Caki2 (cell line): ENCODE measurements at regions of chr10 and their contacts with region 1.

Region 1: DNA sequence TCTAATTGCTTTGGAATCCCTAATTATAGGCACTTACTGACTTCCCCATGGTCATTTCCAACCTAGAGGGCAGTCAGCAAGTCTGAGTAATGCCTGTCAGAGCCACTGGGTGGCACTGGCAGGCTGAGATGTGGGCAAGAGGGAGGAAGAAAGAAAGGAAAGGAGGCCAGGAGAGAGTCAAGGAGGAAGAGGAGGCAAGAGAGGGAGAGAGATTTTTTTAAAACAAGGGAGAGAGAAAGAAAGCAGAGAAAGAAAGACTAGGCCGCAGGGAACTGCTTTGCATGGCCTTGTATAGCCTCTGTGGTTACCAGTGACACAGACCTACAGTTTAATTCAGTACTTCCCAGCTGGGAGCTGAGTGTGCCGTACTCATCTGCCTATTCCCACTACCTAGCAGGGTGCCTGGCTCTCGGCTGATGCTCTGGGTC is 210.4 kb upstream of the ADO start:
- DNase-seq: peak; percentile 74

Region 2: DNA sequence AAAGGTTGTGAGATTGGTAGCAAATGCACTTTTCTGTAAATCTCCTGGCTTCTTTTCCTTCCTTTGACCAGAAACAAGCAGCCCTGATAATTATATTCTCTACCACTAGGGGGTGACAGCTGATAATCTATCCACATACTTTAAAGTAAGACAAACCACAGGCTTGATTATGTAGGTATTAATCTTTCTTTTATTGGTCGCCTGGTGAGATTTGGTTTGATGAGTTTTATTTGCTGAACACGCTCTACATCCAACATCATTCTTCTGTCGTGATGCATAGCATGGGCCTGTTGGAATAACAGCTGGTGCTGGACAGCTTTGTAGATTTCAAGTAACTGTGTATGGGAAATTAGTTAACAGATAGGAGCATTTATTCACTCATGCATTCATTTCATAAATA is 156.4 kb before region 1 on chr10:
- in situ Hi-C with region 1: loop called (anchors 25 kb)
- DNase-seq: peak; percentile 81

Region 3: GRCh38 chr10:62511656-62512055 is 82.5 kb before region 1 on chr10:
- in situ Hi-C with region 1: no loop called
- DNase-seq: no peak

Region 4: DNA sequence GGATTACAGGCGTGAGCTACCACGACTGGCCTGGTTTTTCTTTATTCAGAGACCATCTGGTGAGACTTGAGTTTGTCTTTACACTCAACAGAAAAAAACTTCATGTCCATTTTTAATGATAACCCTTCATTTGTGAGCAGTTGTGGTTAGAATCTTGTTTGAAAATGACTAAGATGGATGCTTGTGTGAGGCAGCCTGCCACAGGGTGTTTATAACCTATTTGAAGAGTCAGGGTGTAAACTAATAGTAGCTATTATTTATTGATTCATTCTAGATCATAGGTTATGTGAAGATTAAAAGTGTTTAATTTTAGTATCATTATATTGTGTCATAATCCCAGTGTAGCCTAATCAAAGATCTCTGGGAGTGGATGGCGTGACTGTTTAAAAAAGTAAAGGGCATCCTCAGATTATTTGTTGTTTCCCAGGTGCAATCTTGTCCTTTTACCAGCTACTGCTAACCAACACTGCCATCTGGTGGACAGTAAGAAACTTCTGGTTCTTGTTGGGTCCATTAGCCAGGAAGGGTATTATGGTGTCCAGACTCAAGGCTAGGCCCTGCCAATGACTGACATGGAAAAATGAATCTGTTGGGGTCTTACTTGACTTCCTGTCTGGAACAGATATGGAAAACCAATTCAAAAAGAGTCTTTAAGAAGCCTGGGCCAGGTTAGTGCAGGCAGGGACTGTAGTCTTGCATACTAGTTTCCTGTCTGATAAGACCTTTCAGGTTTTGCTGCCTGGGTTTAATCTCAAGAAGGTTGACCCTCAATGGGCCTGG is 563.9 kb after region 1 on chr10:
- in situ Hi-C with region 1: loop called (anchors 25 kb)
- DNase-seq: peak; percentile 55